Lower leg skin (tissue), 4 donors: ENCODE measurements at regions of chr20 and their contacts with region 1.

Region 1: GRCh38 chr20:49372095-49372726 is 94.4 kb upstream of the ZNFX1 start:
- DNase-seq: no peak
- H3K4me3 ChIP-seq: no peak overlapping the region
- CTCF ChIP-seq: no peak
- POLR2A ChIP-seq: no peak

Region 2: GRCh38 chr20:49074536-49074935 is 297.7 kb before region 1 on chr20:
- intact Hi-C with region 1: loop called (anchors 5 kb)
- DNase-seq: no peak
- H3K4me3 ChIP-seq: no peak overlapping the region
- CTCF ChIP-seq: no peak
- POLR2A ChIP-seq: no peak

Region 3: DNA sequence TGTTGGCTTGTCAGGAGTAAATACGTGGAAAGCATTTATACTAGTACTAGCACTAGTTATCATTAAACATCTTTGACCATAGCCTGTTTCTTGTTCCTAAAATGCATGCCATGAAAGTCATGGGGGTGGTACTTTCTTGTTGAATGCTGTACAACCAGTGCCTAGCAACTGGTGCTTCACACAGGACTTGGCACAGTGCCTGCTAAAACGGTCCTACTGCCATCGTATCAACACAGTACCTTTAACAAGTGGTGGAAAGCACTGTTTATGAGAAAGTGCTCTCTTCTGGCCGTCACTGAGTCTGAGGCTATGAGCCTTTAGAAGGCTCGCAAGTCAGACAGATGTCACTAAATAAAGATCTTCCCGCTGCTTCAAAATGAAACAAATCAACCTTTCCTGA is 116.0 kb before region 1 on chr20:
- intact Hi-C with region 1: no loop called
- DNase-seq: peak in 1 of 2 donors; percentile 82
- H3K4me3 ChIP-seq: no peak overlapping the region
- CTCF ChIP-seq: no peak
- POLR2A ChIP-seq: no peak

Region 4: GRCh38 chr20:49326026-49326425 is 46.2 kb before region 1 on chr20:
- intact Hi-C with region 1: no loop called
- DNase-seq: no peak
- H3K4me3 ChIP-seq: no peak overlapping the region
- CTCF ChIP-seq: no peak
- POLR2A ChIP-seq: no peak